Left colon (tissue), 2 donors: ENCODE measurements at regions of chr15 and their contacts with region 1.

Region 1: GRCh38 chr15:47987908-47988532 is 132.8 kb upstream of the SLC24A5 start:
- DNase-seq: no peak
- ATAC-seq: peak; percentile 97

Region 2: GRCh38 chr15:47196057-47196456 is 792.0 kb before region 1 on chr15:
- intact Hi-C with region 1: loop called in 1 of 2 experiments (anchors 2 kb)
- DNase-seq: peak; percentile 63 to 70
- ATAC-seq: peak; percentile 100

Region 3: DNA sequence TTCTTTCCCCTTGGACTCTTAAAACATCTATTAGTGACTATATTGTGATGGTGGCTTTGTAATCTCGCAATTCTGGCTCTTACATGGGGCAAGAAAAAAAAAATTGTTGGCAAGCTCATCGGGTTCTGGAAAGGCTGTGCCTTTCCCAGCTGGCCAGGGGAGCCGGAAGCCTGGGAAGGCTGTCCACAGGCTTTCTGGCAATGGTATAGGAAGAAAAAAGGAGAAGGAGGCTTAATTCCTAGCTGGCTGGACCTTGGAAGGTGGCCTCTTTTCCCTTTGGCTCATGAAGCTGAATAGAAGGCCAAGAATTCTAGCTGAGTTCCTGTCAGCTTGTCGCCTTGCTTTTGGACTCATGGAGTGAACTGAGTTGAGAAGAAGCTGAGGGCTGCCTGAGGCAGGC is 514.2 kb before region 1 on chr15:
- intact Hi-C with region 1: loop called in 1 of 2 experiments (anchors 5 kb)
- DNase-seq: peak in 1 of 2 donors; percentile 25
- ATAC-seq: no peak

Region 4: DNA sequence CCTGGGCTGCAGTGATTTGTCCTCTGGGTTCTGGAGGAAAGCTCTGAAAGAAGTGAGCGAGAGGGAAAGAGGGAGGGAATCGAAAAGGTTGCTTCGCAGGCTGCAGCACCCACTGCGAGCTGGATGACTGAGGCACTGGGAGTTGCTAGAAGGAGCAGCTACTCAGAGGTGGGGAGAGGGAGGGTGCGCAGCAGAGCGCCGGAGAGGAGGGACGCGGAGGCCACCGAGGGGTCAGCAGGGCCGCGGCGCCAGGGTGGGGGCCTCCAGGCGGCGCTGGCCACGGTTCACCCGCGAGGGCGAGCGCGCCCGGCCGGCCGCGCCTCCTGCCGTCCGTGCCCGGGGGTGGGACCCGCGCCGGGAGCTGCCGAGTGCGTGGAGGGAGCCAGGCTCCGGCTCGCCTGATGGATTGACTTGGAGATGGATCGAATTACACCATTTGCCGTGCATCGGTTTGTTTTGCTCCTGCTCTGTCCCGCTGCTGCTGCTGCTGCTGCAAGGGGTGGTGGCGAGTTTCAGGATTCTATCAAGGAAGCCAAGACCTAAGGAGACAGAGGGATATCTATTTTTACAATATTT is 270.9 kb before region 1 on chr15 and contains the start of gene SEMA6D:
- intact Hi-C with region 1: loop called in 1 of 2 experiments (anchors 10 kb)
- DNase-seq: peak; percentile 59 to 77
- ATAC-seq: peak; percentile 83
- total RNA-seq, gene SEMA6D: 34.4 to 52.6 TPM